IMR-90 (cell line): ENCODE measurements at regions of chr1 and their contacts with region 1.

Region 1: GRCh38 chr1:177948336-177948972 is 21.4 kb downstream of the SEC16B start:
- DNase-seq: peak; percentile 65
- ATAC-seq: peak; percentile 83
- H3K4me3 ChIP-seq: no peak overlapping the region
- H3K27ac ChIP-seq: no peak overlapping the region
- H3K4me1 ChIP-seq: no peaks in the 10 kb centered on the region; the same call in 1 of the 2 replicates
- H3K27me3 ChIP-seq: no peaks in the 10 kb centered on the region
- CTCF ChIP-seq: peak; percentile 93
- POLR2A ChIP-seq: no peak
- RAD21 ChIP-seq: peak; percentile 73

Region 2: GRCh38 chr1:176897350-176898236 is 1050.9 kb before region 1 on chr1:
- CTCF ChIA-PET with region 1: interaction called, 21 read pairs
- POLR2A ChIA-PET with region 1: no interaction called
- dilution Hi-C with region 1: no loop called
- in situ Hi-C with region 1: loop called (anchors 5 kb)
- intact Hi-C with region 1: loop called (anchors 1 kb)
- DNase-seq: peak; percentile 61
- ATAC-seq: peak; percentile 91
- H3K4me3 ChIP-seq: no peak overlapping the region
- H3K27ac ChIP-seq: no peak overlapping the region
- H3K4me1 ChIP-seq: no peaks in the 10 kb centered on the region
- H3K27me3 ChIP-seq: no peaks in the 10 kb centered on the region
- CTCF ChIP-seq: peak; percentile 77
- POLR2A ChIP-seq: no peak
- RAD21 ChIP-seq: peak; percentile 77

Region 3: GRCh38 chr1:177145102-177146070 is 803.1 kb before region 1 on chr1:
- CTCF ChIA-PET with region 1: no interaction called
- POLR2A ChIA-PET with region 1: no interaction called
- dilution Hi-C with region 1: no loop called
- in situ Hi-C with region 1: no loop called
- intact Hi-C with region 1: no loop called
- DNase-seq: no peak
- ATAC-seq: no peak
- H3K4me3 ChIP-seq: no peak overlapping the region
- H3K27ac ChIP-seq: no peak overlapping the region
- H3K4me1 ChIP-seq: no peaks in the 10 kb centered on the region
- H3K27me3 ChIP-seq: no peaks in the 10 kb centered on the region
- CTCF ChIP-seq: no peak
- POLR2A ChIP-seq: no peak
- RAD21 ChIP-seq: no peak

Region 4: GRCh38 chr1:177256153-177257075 is 692.0 kb before region 1 on chr1:
- CTCF ChIA-PET with region 1: no interaction called
- POLR2A ChIA-PET with region 1: no interaction called
- dilution Hi-C with region 1: no loop called
- in situ Hi-C with region 1: no loop called
- intact Hi-C with region 1: loop called (anchors 1 kb)
- DNase-seq: peak; percentile 81
- ATAC-seq: peak; percentile 85
- H3K4me3 ChIP-seq: no peak overlapping the region
- H3K27ac ChIP-seq: no peak overlapping the region
- H3K4me1 ChIP-seq: peaks cover 3% of the 10 kb centered on the region
- H3K27me3 ChIP-seq: no peaks in the 10 kb centered on the region; the same call in 1 of the 2 replicates
- CTCF ChIP-seq: peak; percentile 39
- POLR2A ChIP-seq: no peak
- RAD21 ChIP-seq: no peak

Region 5: DNA sequence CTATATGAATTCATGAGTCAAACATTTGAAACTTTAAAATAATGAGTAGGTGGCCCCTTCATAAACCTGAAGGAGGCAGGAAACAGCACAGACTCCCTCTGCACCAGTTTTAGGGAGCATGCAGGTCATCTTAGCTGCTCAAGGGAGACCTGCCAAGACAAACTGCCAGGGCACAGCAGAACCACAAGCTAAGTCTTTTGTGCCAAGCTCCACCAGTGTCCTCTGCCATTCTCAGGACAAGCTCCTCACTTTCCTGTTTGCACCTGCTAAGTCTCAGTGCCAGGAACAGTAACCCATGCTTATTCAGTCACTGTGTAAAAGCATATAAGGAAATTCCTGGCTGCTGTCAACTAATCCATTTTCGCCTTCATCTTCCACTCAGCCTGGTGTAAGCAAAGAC is 347.5 kb before region 1 on chr1:
- CTCF ChIA-PET with region 1: no interaction called
- POLR2A ChIA-PET with region 1: no interaction called
- dilution Hi-C with region 1: no loop called
- in situ Hi-C with region 1: no loop called
- intact Hi-C with region 1: loop called (anchors 10 kb)
- DNase-seq: no peak
- ATAC-seq: no peak
- H3K4me3 ChIP-seq: no peak overlapping the region
- H3K27ac ChIP-seq: no peak overlapping the region
- H3K4me1 ChIP-seq: no peaks in the 10 kb centered on the region
- H3K27me3 ChIP-seq: no peaks in the 10 kb centered on the region
- CTCF ChIP-seq: no peak
- POLR2A ChIP-seq: no peak
- RAD21 ChIP-seq: no peak

Region 6: DNA sequence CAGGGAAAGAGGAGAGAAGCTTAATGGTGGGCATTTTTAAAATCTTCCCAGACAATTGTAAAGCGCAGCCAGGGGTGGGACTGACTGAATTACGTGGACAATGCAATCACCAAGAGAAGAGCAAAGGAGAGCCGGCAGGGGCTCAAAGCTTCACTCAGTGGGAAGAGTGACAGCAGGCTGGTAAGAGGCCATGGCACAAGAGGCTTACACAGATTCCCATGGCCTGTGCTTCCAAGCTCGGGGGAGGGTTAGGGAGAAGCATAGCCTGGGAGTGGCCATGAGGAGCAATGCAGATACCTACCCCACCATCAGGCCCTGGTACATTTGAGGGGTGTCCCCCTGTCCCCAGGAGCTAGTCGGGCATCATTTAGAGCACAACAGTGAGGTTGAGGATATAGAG is 48.5 kb after region 1 on chr1:
- CTCF ChIA-PET with region 1: no interaction called
- POLR2A ChIA-PET with region 1: no interaction called
- dilution Hi-C with region 1: no loop called
- in situ Hi-C with region 1: no loop called
- intact Hi-C with region 1: no loop called
- DNase-seq: no peak
- ATAC-seq: no peak
- H3K4me3 ChIP-seq: no peak overlapping the region
- H3K27ac ChIP-seq: no peak overlapping the region
- H3K4me1 ChIP-seq: no peaks in the 10 kb centered on the region
- H3K27me3 ChIP-seq: peaks cover 3% of the 10 kb centered on the region
- CTCF ChIP-seq: no peak
- POLR2A ChIP-seq: no peak
- RAD21 ChIP-seq: no peak

Region 7: DNA sequence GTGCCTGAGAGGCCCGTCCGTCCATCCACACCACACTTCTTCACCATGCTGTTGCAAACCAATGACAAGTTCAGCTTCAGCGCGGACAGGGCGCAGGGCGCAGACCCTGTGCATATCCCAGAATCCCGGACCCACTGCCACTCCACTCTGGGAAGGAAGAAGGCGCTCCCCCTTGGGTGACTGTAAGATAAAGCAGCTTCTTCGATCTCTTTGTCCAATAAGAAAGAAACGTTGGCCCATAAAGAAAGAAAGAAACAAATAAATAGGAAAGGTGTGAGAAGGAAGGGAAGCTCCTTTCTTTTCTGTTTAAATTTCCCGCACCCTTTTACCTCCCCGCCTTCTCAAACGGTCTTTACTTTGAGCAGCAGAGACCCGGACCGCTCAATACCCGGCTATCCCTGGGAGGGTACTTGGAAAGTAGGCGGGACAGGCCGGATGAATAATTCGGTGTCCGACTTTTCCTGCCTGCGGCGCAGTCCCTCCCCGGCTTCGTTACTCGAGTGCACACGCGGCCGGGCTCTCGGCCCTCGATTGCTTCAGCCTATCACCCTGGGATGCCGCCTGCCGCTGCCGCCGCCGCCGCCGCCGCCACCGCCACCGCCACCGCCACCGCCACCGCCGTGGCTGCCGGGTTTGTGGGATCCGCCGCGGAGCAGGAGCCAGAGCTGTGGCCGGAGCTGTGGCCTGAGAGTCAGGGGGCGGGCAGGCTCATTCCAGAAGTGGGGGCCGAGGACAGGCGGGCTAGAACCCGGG is 144.9 kb after region 1 on chr1:
- CTCF ChIA-PET with region 1: no interaction called
- POLR2A ChIA-PET with region 1: no interaction called
- dilution Hi-C with region 1: no loop called
- in situ Hi-C with region 1: no loop called
- intact Hi-C with region 1: loop called (anchors 1 kb)
- DNase-seq: peak; percentile 96
- ATAC-seq: peak; percentile 85
- H3K4me3 ChIP-seq: peak overlapping the region; percentile 77
- H3K27ac ChIP-seq: peak overlapping the region; percentile 70
- H3K4me1 ChIP-seq: peaks cover 9% of the 10 kb centered on the region; the same call in 1 of the 2 replicates
- H3K27me3 ChIP-seq: no peaks in the 10 kb centered on the region
- CTCF ChIP-seq: 0 out of 2 replicates have a peak, but pooled peaks have one; percentile 4
- POLR2A ChIP-seq: no peak; the same call in none of the 2 replicates
- RAD21 ChIP-seq: no peak